ENCODE measurements at regions of chr3 and their contacts with region 1.

Region 1: GRCh38 chr3:50337191-50337841 is 3.3 kb downstream of the RASSF1 start:
- DNase-seq: peak; percentile 99
- ATAC-seq: peak; percentile 74
- H3K4me3 Mint-ChIP-seq: peak overlapping the region; percentile 92
- H3K27ac Mint-ChIP-seq: peak overlapping the region; percentile 94
- H3K4me1 Mint-ChIP-seq: peaks cover 50% of the 10 kb centered on the region
- H3K27me3 Mint-ChIP-seq: no peaks in the 10 kb centered on the region

Region 2: DNA sequence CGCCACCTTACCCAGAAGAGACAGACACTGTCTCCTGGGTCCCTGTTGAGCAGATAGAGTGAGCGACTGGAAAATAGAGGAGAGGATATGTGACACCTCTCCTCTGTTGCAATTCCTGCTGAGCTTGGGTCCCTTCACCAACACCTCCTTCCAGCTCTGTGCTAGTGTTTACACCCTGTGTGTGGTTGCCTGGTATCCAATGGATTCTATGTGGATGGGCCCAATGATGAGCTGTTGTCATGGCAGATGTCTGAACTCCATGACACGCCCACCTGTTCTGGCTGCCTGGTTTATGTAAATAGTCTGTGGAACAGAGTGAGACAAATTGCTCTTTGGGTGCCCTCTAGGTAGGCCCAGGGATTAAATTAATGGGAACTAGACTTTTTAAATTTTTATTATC is 224.9 kb before region 1 on chr3:
- CTCF ChIA-PET with region 1: no interaction called
- DNase-seq: no peak
- ATAC-seq: no peak
- H3K4me3 Mint-ChIP-seq: no peak overlapping the region
- H3K27ac Mint-ChIP-seq: peak overlapping the region; percentile 19
- H3K4me1 Mint-ChIP-seq: peaks cover 3% of the 10 kb centered on the region
- H3K27me3 Mint-ChIP-seq: no peaks in the 10 kb centered on the region

Region 3: DNA sequence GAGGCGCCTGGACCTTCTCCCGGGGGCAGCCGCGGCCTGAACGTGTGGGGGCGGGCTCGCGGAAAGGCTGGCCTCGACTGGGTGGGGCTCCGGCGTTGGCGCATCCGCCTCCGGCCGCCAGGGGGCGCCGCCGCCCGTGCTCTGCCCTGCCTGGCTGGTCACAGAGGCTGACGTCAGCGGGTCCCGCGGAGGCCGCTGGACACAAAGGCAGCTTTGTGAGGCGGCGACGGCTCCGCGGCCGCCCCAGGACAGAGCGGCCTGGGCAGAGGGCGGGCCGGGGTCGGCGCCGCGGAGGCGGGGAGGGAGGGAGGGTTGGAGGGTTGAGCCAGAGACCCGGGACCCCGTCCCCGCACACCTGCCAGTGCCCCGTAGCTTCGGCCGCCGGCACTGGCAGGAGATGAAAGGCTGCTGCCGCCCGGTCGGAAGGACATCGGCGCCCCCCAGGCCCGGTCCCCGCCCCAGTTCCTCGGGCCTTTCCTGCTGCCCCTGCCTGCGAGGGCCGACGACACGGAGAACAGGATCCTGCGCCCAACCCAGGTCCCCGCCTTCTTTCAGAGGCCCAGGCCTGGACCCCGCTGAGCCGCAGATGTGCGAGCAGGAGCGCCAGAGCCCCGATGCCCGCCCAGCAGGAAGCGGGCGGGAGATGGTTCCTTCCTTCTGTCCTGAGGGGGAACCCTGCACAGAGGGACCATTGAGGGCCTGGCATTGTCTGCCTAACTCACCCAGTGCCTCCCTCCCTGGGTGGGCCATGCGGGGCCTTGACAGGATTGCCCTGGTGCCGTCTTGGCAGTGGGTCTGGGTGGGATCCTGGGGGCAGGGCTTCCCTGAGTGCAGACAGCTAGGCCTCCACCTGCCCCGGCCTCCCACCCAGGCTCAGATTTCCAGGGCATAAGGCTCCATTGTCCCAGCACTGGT is 77.0 kb before region 1 on chr3:
- CTCF ChIA-PET with region 1: interaction called, 10 read pairs
- DNase-seq: peak; percentile 91
- ATAC-seq: peak; percentile 97
- H3K4me3 Mint-ChIP-seq: peak overlapping the region; percentile 47
- H3K27ac Mint-ChIP-seq: peak overlapping the region; percentile 32
- H3K4me1 Mint-ChIP-seq: peaks cover 7% of the 10 kb centered on the region
- H3K27me3 Mint-ChIP-seq: no peaks in the 10 kb centered on the region

Region 4: DNA sequence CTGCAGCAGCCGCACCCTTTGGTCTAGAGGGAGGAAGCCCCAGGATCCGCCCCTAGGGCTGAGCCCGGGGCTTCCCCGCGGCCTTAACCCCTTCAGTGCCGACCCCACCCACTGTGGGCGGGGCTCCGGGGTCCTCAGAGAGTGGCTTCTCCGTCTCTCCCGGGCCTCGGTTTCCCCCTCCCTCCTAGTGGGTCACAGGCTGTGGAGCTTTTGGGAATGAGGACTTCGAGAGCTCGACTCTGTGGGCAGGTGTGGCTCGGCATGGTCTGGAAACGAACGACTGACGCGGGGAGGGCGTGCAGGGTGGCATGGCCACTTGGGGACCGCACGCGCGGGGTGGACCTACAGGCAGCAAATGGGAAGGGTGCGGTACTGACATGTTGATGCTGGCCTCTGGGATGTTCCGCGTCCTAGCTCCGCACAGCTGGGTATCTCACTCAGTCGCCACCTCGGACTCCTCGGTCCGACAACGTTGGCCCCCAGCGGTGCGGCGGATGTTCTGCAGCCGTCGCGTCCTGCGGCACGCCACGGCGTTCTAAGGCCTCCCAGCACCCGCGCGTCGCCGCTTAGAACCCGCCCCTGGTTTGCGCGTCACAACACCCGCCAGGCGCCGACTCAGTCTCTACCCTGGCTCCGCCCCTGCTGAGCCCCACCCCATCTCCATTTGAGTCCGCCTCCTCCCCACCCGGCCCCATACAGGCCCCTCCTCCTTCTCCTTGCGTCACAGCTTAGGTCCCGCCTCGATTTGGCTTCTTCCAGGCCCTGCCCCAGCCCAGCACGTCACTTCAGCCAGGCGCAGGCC is 38.3 kb before region 1 on chr3 and contains the starts of genes HYAL3 and NAA80:
- CTCF ChIA-PET with region 1: interaction called, 12 read pairs
- DNase-seq: peak; percentile 100
- ATAC-seq: peak; percentile 84
- H3K4me3 Mint-ChIP-seq: peak within 1 kb of the TSS; percentile 96
- H3K27ac Mint-ChIP-seq: peak within 1 kb of the TSS; percentile 99
- H3K4me1 Mint-ChIP-seq: peaks cover 23% of the 10 kb centered on the region
- H3K27me3 Mint-ChIP-seq: no peaks in the 10 kb centered on the region
- total RNA-seq, gene HYAL3: 13.0 to 14.3 TPM
- total RNA-seq, gene NAA80: 23.1 to 37.3 TPM

Region 5: DNA sequence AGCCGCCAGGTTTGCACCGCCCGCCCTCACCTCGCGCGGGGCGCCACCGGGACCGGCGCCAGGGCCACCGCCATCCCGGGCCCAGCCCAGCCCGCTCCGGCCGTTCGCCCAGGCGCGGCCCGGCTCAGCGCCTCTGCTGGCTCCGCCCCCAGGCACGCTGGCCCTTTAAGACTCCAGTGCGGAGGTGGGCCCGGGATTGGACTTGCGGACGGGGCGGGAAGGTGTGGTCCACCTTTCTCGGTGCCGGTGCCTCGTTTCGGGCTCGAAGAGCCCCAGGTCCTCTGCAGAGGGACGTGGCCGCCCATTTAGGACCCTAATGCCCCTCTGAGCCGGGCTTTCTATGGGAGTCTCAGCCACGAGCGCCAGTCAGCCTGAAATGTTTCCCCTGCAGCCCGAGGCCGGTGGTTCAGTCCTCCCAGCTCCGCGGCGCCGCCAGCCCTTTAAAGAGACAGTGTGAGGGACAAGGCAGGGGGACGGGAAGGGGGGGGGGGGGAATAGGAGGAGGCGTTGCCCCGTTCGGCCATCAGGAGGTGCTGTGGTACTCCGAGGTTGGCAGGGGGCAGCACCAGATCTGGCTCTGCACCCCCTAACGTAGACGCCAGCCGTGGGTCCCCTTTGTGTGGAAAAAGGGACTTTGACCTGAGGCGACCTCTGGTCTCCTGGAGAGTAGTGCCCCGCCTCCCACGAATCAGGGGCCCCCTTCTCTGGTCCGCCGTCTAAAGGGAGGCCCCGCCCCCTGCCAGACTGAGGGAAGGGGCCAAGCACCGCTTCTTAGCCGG is 15.8 kb before region 1 on chr3:
- CTCF ChIA-PET with region 1: interaction called, 91 read pairs
- DNase-seq: peak; percentile 90
- ATAC-seq: peak; percentile 76
- H3K4me3 Mint-ChIP-seq: peak overlapping the region; percentile 89
- H3K27ac Mint-ChIP-seq: peak overlapping the region; percentile 93
- H3K4me1 Mint-ChIP-seq: peaks cover 37% of the 10 kb centered on the region
- H3K27me3 Mint-ChIP-seq: no peaks in the 10 kb centered on the region

Region 6: GRCh38 chr3:50350527-50351322 is 13.4 kb after region 1 on chr3 and contains the starts of genes CYB561D2 and NPRL2:
- CTCF ChIA-PET with region 1: interaction called, 37 read pairs
- DNase-seq: peak; percentile 100
- ATAC-seq: peak; percentile 92
- H3K4me3 Mint-ChIP-seq: peak within 1 kb of the TSS; percentile 93
- H3K27ac Mint-ChIP-seq: peak within 1 kb of the TSS; percentile 97
- H3K4me1 Mint-ChIP-seq: peaks cover 63% of the 10 kb centered on the region
- H3K27me3 Mint-ChIP-seq: no peaks in the 10 kb centered on the region
- total RNA-seq, gene CYB561D2: 35.1 to 37.7 TPM
- total RNA-seq, gene NPRL2: 45.3 to 49.7 TPM

Region 7: DNA sequence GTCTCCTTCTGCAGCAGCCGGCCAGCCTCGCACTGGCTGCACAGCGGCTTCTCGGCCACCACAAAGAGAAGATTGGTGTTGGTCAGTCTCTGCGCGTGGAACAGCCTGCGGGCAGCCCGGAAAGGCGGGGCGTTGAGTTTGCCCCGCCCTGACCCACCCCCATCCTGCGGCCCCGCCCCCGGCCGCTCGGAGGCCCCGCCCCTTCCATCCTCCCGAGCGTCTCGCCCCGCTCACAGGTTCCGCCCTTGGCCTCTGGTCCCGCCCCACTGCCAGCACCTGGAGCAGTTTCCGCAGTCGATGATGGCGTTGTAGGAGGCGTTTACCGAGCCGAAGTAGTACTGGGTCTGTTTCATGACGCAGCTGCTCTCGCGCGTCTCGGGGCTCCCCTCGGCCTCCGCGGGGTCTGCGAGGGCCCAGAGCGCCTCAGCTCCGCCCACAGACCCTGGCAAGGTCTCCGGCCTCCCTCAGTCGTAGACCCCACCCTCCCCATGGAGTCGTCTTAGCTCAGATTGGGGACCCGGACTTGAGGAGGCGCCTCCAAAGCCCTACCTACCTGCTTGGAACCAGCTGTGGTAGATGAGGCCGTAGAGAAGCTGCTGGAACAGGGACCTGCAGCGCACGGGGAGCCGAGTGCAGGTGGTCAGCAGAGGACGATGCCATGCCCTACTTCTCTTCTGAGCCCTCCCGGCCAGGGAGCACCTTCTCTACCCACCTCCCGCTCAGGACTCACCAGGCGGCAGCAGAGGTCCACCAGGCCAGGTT is 27.9 kb after region 1 on chr3:
- CTCF ChIA-PET with region 1: no interaction called
- DNase-seq: peak; percentile 97
- ATAC-seq: peak; percentile 99
- H3K4me3 Mint-ChIP-seq: peak overlapping the region; percentile 75
- H3K27ac Mint-ChIP-seq: peak overlapping the region; percentile 79
- H3K4me1 Mint-ChIP-seq: peaks cover 4% of the 10 kb centered on the region
- H3K27me3 Mint-ChIP-seq: no peaks in the 10 kb centered on the region